Sigmoid colon (tissue), 7 donors: ENCODE measurements at regions of chr9 and their contacts with region 1.

Region 1: GRCh38 chr9:116860509-116861120 is 173.5 kb downstream of the TRIM32 start:
- DNase-seq: peak; percentile 72
- H3K4me3 ChIP-seq: no peak overlapping the region
- H3K27ac ChIP-seq: no peak overlapping the region
- H3K4me1 ChIP-seq: no peaks in the 10 kb centered on the region
- H3K27me3 ChIP-seq: no peaks in the 10 kb centered on the region
- CTCF ChIP-seq: peak in 3 of 4 experiments; percentile 34 to 55 (median 49)
- EP300 ChIP-seq: no peak
- POLR2A ChIP-seq: no peak

Region 2: DNA sequence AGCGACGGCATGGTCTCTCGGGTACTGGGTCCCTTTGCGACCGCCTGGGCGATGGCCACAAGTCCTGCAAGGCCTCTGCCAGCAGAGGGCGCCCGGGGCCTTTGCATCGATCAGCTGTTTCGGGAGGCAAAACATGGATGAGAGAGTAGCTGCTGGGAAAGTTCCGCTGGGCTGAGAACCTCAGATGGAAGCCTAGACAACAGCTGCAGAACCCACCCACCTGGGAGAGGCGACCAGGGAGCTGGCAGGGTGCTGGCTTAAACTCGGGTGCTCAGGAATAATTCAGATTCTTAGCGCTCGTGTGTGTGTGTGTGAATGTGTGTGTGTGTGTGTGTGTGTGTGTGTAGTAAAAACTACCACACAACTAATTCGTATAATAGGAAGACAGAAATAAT is 123.5 kb before region 1 on chr9:
- intact Hi-C with region 1: loop called (anchors 5 kb)
- DNase-seq: peak; percentile 74
- H3K4me3 ChIP-seq: no peak overlapping the region
- H3K27ac ChIP-seq: no peak overlapping the region
- H3K4me1 ChIP-seq: no peaks in the 10 kb centered on the region
- H3K27me3 ChIP-seq: peaks cover 0 to 2% (median 0%) of the 10 kb centered on the region in 3 donors
- CTCF ChIP-seq: peak in 3 of 4 experiments; percentile 47 to 76 (median 67)
- EP300 ChIP-seq: no peak
- POLR2A ChIP-seq: no peak

Region 3: GRCh38 chr9:117021901-117022300 is 161.3 kb after region 1 on chr9:
- intact Hi-C with region 1: no loop called
- DNase-seq: no peak
- H3K4me3 ChIP-seq: no peak overlapping the region
- H3K27ac ChIP-seq: no peak overlapping the region
- H3K4me1 ChIP-seq: no peaks in the 10 kb centered on the region
- H3K27me3 ChIP-seq: no peaks in the 10 kb centered on the region
- CTCF ChIP-seq: no peak
- EP300 ChIP-seq: no peak
- POLR2A ChIP-seq: no peak